RWPE1 (cell line): ENCODE measurements at regions of chr10 and their contacts with region 1.

Region 1: DNA sequence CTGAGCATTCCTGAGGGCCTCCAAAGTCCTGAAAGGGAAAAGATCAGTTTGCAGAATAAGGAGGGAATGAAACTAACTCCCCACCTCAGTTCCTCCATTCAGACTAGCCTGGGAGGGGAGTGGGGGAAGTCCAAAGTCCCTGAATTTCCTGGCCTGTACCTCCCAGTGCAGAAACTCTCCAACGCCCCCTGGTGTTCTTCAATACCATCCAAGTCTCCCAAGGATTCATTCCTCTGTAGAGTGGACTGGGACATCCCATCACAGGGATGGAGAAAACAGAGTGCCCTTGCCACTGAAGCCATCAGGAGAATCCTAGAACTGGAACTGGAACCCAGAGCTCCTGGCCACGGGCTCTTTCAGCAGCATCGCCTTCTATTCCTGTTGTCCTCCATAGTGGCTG is 1.6 kb upstream of the COL13A1 start:
- DNase-seq: peak; percentile 62
- H3K27ac ChIP-seq: no peak overlapping the region
- CTCF ChIP-seq: peak; percentile 44

Region 2: GRCh38 chr10:69600761-69601330 is 199.3 kb before region 1 on chr10:
- CTCF ChIA-PET with region 1: no interaction called
- POLR2A ChIA-PET with region 1: no interaction called
- DNase-seq: no peak
- H3K27ac ChIP-seq: no peak overlapping the region
- CTCF ChIP-seq: no peak

Region 3: DNA sequence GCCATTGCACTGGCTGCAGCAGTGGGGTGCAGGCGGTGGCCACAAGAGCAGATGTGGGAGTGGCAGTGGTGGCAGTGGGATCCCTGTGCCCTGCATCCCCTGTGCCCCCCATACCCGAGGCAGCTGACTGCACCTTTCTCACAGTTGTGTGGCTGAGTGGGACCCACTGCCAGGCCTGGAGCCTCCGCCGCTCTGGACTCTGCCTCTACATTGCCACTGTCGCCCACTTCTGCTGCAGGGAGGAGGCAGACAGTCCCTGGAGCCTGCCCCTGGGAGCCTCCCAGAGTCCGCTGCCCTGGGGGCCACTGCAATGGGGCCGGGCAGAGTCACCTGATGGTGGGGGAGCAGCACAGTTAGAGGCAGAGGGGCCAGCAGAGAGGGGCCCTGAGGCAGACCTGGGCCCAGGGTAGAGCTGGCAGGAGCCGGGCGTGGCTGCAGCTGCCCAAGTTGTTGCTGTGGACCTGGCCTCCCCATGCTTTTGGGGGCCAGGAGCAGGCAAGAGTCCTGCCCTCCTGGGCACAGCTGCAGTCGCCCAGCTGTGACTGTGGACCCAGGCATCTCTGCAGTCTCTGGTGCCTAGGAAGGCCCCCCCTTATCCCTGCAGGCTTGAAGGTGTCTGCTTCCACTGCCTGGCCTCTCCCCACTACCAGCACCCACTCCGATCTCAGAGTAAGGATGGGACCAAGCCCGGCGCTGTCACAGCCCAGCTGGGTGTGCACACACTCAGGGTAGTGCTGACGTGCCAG is 147.8 kb before region 1 on chr10:
- CTCF ChIA-PET with region 1: no interaction called
- POLR2A ChIA-PET with region 1: no interaction called
- DNase-seq: no peak
- H3K27ac ChIP-seq: no peak overlapping the region
- CTCF ChIP-seq: no peak

Region 4: DNA sequence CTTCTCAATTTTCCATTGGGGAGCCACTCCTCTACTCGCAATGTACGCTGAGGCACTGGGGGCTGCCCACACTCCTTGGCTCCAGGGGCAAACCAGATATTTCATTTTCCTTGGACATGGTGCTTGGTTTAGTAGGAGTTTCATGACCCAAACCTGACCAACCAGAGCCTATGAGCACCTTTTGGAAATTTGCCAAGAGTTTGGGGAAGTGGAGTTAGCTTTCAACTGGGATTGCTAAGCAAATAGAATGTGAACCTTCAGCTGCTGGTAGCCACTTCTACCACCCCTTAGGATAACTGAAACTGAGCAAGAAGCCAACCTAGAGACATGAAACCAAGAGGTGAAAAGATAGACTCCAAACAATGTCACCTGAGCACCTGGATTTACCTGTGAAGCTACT is 73.3 kb before region 1 on chr10:
- CTCF ChIA-PET with region 1: interaction called, 14 read pairs
- POLR2A ChIA-PET with region 1: no interaction called
- DNase-seq: no peak
- H3K27ac ChIP-seq: no peak overlapping the region
- CTCF ChIP-seq: no peak

Region 5: GRCh38 chr10:69968830-69969229 is 168.7 kb after region 1 on chr10:
- CTCF ChIA-PET with region 1: no interaction called
- POLR2A ChIA-PET with region 1: no interaction called
- DNase-seq: no peak
- H3K27ac ChIP-seq: no peak overlapping the region
- CTCF ChIP-seq: no peak

Region 6: DNA sequence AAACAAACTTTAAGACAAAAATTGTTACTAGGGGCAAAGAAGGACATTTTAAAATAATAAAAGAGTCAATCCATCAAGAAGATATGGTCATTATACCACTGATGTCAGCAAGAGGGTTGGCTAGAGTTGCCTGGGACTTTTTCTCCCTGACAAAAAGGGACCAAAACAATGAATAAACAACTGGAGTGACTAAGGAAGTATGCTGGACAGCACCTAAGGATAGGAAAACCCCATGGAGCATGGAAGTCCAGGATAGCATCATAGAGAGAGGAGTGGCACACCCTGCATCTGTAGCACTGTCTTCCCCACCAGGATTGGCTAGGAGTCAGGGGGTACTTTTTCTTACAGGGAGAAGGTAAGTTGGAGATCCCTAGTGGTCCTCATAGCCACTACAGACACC is 179.1 kb after region 1 on chr10:
- CTCF ChIA-PET with region 1: no interaction called
- POLR2A ChIA-PET with region 1: no interaction called
- DNase-seq: no peak
- H3K27ac ChIP-seq: no peak overlapping the region
- CTCF ChIP-seq: no peak